Naive thymus-derived CD8-positive, alpha-beta T cell (primary cell): ENCODE measurements at regions of chr3 and their contacts with region 1.

Region 1: GRCh38 chr3:129576514-129577352 is 29.7 kb downstream of the PLXND1 start:
- DNase-seq: peak; percentile 21 to 87 (median 77)
- ATAC-seq: peak; percentile 88 to 92
- H3K4me3 Mint-ChIP-seq: peak overlapping the region in 9 of 10 donors; percentile 55 to 78 (median 66)
- H3K27ac Mint-ChIP-seq: peak overlapping the region; percentile 91 to 97 (median 94)
- H3K4me1 Mint-ChIP-seq: peaks cover 25 to 52% (median 40%) of the 10 kb centered on the region in 4 donors
- H3K27me3 Mint-ChIP-seq: peaks cover 0 to 2% (median 0%) of the 10 kb centered on the region in 5 donors

Region 2: GRCh38 chr3:129295286-129295685 is 281.4 kb before region 1 on chr3:
- POLR2A ChIA-PET with region 1: no interaction called
- DNase-seq: no peak
- ATAC-seq: no peak
- H3K4me3 Mint-ChIP-seq: no peak overlapping the region
- H3K27ac Mint-ChIP-seq: peak overlapping the region in 2 of 10 donors; percentile 13 to 28
- H3K4me1 Mint-ChIP-seq: peaks cover 2 to 12% (median 10%) of the 10 kb centered on the region in 4 donors
- H3K27me3 Mint-ChIP-seq: no peaks in the 10 kb centered on the region

Region 3: DNA sequence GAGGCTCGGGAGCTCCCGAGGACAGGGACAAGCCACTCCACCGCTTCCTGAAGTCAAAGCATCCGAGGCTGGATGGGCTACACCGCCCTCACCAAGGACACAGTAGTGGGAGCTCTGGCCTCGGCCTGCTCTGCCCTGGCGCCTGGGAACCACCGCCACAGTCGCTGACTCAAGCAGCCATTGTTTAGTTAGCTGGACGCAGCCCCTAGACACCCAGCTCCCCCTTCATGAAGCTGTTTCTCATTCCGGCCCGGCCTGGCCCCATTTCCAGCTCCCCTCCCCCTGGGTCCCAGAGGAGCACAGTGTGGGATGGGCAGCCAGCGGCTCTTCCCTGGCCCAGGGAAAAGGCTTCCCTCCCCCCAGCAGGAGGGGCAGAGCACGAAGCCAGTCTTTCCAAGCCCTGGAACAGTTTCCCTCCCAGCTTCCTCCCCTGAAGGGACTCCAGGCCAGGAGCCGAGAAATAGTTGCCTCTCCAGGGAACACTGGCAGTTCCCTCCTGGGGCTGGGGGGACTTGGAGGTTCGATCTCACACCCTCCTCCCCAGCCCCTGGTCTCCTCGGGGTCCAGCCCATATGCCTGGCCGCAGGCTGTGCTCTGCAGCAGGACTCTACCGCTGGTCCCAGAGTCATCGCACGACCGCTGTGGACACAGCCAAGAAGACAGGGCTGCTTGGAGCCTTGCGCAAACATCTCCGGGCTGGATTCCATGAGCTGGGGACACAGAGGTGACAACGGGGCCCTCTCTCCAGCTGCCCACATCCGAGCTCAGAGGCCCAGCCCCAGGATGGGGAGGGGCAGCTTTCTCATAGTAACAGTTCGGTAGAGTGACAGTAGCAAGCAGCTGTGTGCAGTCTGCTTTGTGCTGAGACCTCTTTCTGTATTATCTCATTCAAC is 19.7 kb after region 1 on chr3:
- POLR2A ChIA-PET with region 1: interaction called, 42 read pairs
- DNase-seq: no peak
- ATAC-seq: no peak
- H3K4me3 Mint-ChIP-seq: no peak overlapping the region
- H3K27ac Mint-ChIP-seq: no peak overlapping the region
- H3K4me1 Mint-ChIP-seq: peaks cover 17 to 65% (median 29%) of the 10 kb centered on the region in 4 donors
- H3K27me3 Mint-ChIP-seq: peaks cover 0 to 11% (median 5%) of the 10 kb centered on the region in 5 donors

Region 4: DNA sequence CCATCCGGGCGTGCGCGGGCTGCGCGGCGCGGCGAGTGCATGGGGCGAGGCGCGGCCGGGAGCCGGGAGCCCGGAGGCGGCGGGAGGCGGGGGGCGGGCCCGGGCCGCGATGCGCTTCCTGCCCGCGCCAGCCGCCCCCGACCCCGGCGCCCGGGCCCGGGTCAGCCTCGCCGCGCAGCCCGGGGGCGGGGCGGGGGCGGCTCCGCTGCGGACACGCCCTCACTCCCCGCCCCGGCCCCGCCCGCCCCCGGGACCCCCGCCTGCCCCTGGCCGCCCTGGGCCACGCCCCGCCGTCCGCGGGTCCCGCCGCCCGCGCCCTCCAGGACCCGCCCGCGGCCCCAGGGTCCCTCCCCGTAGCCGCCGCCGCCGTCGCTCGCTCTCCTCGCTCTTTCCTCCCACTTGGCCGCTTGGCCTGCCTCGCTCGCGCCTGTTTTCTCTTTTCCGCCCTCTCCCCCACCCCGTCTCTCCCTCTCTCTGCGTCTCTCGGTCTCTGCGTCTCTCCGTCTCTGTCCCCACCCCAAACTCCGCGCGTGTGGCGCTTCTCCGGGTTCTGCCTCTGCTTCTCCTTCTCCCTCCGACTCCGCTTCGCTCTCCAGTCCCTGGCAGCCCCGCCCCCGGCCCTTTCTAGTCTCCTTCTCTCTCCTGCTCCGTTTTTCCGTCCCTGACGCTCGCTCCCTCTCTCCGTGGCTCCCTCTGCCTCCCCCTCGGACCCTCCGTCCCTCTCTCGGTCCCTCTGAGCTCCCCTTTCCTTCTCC is 30.1 kb after region 1 on chr3 and contains the start of gene PLXND1:
- POLR2A ChIA-PET with region 1: interaction called, 24 read pairs
- DNase-seq: peak in 6 of 10 donors; percentile 20 to 54 (median 31)
- ATAC-seq: peak; percentile 51 to 69
- H3K4me3 Mint-ChIP-seq: peak within 1 kb of the TSS; percentile 83 to 97 (median 94)
- H3K27ac Mint-ChIP-seq: peak within 1 kb of the TSS in 9 of 10 donors; percentile 82 to 93 (median 85)
- H3K4me1 Mint-ChIP-seq: peaks cover 11 to 31% (median 19%) of the 10 kb centered on the region in 4 donors
- H3K27me3 Mint-ChIP-seq: peaks cover 9 to 33% (median 13%) of the 10 kb centered on the region in 5 donors
- polyA plus RNA-seq, gene PLXND1: 0.25 to 1.2 (median 0.30) TPM

Region 5: GRCh38 chr3:129695230-129695629 is 118.5 kb after region 1 on chr3:
- POLR2A ChIA-PET with region 1: no interaction called
- DNase-seq: no peak
- ATAC-seq: no peak
- H3K4me3 Mint-ChIP-seq: no peak overlapping the region
- H3K27ac Mint-ChIP-seq: no peak overlapping the region
- H3K4me1 Mint-ChIP-seq: peaks cover 7 to 23% (median 10%) of the 10 kb centered on the region in 4 donors
- H3K27me3 Mint-ChIP-seq: no peaks in the 10 kb centered on the region

Region 6: DNA sequence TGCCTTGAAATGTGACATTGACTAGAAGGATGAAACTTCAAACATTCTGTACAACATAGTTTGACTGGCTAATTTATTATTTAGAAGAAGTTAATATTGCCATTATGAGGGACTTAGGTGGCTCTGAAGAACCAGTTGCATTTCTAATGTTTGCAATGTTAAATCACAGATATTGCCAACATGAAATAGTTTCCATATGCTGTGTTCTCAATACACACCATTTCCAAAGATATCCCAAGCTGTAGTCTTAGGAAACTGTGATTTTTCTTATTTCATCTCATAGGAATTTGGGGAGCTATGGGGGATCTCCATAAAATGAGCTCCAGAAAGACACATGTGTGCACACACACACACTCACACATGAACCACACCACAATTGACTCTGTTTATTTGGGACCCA is 541.2 kb after region 1 on chr3:
- POLR2A ChIA-PET with region 1: no interaction called
- DNase-seq: no peak
- ATAC-seq: no peak
- H3K4me3 Mint-ChIP-seq: no peak overlapping the region
- H3K27ac Mint-ChIP-seq: no peak overlapping the region
- H3K4me1 Mint-ChIP-seq: peaks cover under 1 to 14% (median 4%) of the 10 kb centered on the region in 4 donors
- H3K27me3 Mint-ChIP-seq: no peaks in the 10 kb centered on the region